CD4-positive, alpha-beta memory T cell (primary cell): ENCODE measurements at regions of chr7 and their contacts with region 1.

Region 1: DNA sequence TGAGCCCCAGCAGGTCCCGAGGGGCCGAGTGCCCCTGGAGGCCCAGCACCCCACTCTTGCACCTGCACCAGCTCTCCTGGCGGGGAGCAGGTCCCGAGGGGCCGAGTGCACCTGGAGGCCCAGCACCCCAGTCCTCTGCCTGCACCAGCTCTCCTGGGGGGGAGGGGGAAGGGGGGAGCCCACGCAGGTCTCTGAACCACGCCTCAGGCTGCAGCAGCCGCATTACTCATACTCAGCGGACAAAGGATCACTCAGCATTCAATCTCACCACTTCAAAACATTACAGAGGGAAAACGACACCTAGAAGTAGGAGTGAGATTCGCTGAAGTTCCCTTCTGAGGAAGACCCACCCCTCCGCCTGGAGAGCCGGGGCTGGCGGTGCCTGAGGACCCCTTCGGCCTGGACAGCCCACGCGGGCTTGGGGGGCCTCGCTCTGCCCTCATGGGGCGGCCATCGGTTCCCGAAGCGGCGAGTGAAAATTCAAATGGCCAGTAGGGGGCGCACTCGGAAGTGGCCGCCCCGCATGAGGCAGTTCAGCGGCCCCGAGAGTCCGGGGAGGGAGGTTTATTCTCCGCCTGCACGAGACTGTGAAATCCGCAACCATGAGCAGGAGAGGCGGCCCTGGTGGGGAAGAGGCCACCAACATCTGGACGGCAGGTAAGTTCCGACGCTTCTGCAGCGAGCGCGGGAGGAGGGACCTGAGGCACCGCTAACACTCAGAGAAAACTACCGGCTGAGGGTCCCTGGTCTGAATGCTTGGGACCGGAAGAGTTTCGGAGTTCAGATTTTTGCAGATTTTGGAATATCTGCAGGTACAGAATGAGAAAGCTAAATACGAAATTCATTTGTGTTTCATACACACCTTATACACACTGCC is 1.1 kb upstream of the GPER1 start:
- DNase-seq: peak; percentile 56 to 67 (median 59)
- H3K4me3 ChIP-seq: peak overlapping the region in 1 of 2 donors; percentile 21
- H3K4me3 Mint-ChIP-seq: peak overlapping the region; percentile 65 to 79 (median 70)
- H3K27ac ChIP-seq: no peak overlapping the region
- H3K27ac Mint-ChIP-seq: peak overlapping the region in 2 of 7 donors; percentile 36 to 47
- H3K4me1 ChIP-seq: peaks cover 10% of the 10 kb centered on the region
- H3K4me1 Mint-ChIP-seq: peaks cover 8 to 14% (median 9%) of the 10 kb centered on the region in 4 donors
- H3K27me3 ChIP-seq: no peaks in the 10 kb centered on the region
- H3K27me3 Mint-ChIP-seq: no peaks in the 10 kb centered on the region

Region 2: GRCh38 chr7:1169409-1170368 is 82.9 kb after region 1 on chr7:
- CTCF ChIA-PET with region 1: interaction called, 5 read pairs
- POLR2A ChIA-PET with region 1: no interaction called
- intact Hi-C with region 1: loop called (anchors 1 kb)
- DNase-seq: peak; percentile 89 to 94 (median 92)
- H3K4me3 ChIP-seq: peak overlapping the region; percentile 35 to 52
- H3K4me3 Mint-ChIP-seq: peak overlapping the region; percentile 84 to 95 (median 92)
- H3K27ac ChIP-seq: peak overlapping the region; percentile 29
- H3K27ac Mint-ChIP-seq: peak overlapping the region; percentile 85 to 98 (median 93)
- H3K4me1 ChIP-seq: peaks cover 10% of the 10 kb centered on the region
- H3K4me1 Mint-ChIP-seq: peaks cover 11 to 21% (median 12%) of the 10 kb centered on the region in 4 donors
- H3K27me3 ChIP-seq: no peaks in the 10 kb centered on the region
- H3K27me3 Mint-ChIP-seq: no peaks in the 10 kb centered on the region

Region 3: DNA sequence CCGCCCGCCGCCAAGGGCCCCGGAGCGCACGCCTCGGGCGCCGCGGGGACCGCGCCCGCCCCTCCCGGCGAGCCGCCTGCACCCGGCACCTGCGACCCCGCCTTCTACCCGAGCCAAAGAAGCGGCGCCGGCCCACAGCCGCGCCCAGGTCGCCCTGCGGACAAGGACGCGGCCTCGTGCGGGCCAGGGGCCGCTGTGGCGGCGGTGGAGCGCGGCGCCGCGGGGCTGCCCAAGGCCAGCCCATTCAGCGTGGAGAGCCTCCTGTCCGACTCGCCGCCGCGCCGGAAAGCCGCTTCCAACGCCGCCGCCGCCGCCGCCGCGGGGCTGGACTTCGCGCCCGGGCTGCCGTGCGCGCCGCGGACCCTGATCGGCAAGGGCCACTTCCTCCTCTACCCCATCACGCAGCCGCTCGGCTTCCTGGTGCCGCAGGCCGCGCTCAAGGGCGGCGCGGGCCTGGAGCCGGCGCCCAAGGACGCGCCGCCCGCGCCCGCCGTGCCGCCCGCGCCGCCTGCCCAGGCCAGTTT is 149.4 kb after region 1 on chr7:
- CTCF ChIA-PET with region 1: no interaction called
- POLR2A ChIA-PET with region 1: no interaction called
- intact Hi-C with region 1: no loop called
- DNase-seq: no peak
- H3K4me3 ChIP-seq: no peak overlapping the region
- H3K4me3 Mint-ChIP-seq: no peak overlapping the region
- H3K27ac ChIP-seq: no peak overlapping the region
- H3K27ac Mint-ChIP-seq: peak overlapping the region in 1 of 7 donors; percentile 77
- H3K4me1 ChIP-seq: peaks cover 19% of the 10 kb centered on the region
- H3K4me1 Mint-ChIP-seq: peaks cover 17 to 35% (median 24%) of the 10 kb centered on the region in 4 donors
- H3K27me3 ChIP-seq: peaks cover 51% of the 10 kb centered on the region
- H3K27me3 Mint-ChIP-seq: peaks cover 39 to 40% of the 10 kb centered on the region in 2 donors